Activated CD4-positive, alpha-beta memory T cell treated with anti-CD3 and anti-CD28 coated beads for 36 hours (primary cell): ENCODE measurements at regions of chr15 and their contacts with region 1.

Region 1: DNA sequence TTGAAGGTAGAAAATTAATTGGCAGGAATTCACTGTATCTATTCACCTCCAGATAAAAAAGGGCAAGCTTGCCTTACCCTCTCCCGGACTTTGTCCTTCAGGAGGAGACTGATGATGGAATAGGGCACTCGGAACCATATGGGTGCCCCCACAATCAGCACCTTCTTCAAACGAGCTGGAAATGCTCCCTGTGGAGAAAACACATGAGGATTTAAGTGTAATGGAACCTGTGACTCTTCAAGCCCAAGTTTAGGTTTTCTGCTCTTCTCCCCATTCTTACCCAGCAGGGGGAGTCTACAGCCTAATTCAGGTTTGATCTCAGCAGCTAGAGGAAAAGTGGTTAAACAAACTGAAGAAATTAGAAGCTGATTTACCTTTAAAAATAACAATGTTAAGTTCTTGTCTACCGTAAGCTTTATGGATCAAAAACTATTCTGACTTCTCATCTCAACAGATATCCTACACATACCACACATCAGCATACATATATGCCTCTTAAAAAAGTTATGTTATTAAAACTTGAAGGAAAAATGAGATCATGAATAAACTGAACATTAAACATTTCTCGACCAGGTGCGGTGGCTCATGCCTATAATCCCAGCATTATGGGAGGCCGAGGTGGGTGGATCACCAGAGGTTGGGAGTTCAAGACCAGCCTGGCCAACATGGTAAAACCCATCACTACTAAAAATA is 57.5 kb upstream of the SIN3A start:
- DNase-seq: no peak
- H3K4me3 Mint-ChIP-seq: no peak overlapping the region
- H3K27ac Mint-ChIP-seq: no peak overlapping the region
- H3K4me1 Mint-ChIP-seq: no peaks in the 10 kb centered on the region
- H3K27me3 Mint-ChIP-seq: no peaks in the 10 kb centered on the region

Region 2: GRCh38 chr15:75483961-75484360 is 25.0 kb before region 1 on chr15:
- CTCF ChIA-PET with region 1: no interaction called
- POLR2A ChIA-PET with region 1: no interaction called
- intact Hi-C with region 1: no loop called
- DNase-seq: no peak
- H3K4me3 Mint-ChIP-seq: no peak overlapping the region
- H3K27ac Mint-ChIP-seq: no peak overlapping the region
- H3K4me1 Mint-ChIP-seq: peaks cover 3% of the 10 kb centered on the region
- H3K27me3 Mint-ChIP-seq: no peaks in the 10 kb centered on the region

Region 3: DNA sequence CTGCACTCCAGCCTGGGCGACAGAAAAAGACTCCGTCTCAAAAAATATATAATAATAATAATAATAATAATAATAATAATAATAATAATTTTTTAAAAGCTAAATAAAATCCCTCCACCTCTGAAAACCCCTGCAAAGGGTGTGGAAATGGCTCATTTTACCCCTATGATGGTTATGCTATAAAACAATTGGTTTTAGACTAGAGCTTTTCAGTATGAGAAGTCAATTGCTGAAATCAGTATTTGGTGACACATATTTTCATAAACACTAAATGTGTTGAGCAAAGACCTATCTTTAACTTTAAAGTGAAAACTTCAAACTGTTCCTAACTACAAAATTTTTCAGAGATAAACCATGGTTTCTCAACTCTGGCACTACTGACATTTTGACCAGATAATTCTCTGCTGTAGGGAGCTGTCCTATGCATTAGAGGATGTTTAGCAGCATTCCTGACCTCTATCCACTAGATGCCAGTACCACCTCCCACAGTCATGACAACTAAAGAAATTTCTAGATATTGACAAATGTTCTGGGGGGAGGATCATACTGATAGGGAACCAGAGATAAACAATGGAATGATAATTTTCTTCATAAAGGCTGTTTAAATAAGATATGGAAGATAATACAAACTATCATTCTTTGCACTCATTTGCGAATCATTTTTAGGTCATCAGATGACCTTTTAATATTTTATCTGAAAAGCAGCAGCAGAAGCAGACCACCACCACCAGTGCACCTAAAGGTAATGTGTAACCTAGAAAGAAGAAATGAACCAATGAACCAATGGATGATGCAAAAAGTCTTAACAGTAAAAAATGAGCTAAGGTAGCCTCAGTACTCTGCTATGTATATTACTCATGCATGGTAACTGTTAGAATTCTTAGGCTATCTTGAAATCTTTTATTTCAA is 56.3 kb after region 1 on chr15:
- CTCF ChIA-PET with region 1: no interaction called
- POLR2A ChIA-PET with region 1: no interaction called
- intact Hi-C with region 1: no loop called
- DNase-seq: no peak
- H3K4me3 Mint-ChIP-seq: no peak overlapping the region
- H3K27ac Mint-ChIP-seq: peak overlapping the region; percentile 38
- H3K4me1 Mint-ChIP-seq: peaks cover 15% of the 10 kb centered on the region
- H3K27me3 Mint-ChIP-seq: no peaks in the 10 kb centered on the region

Region 4: GRCh38 chr15:75578948-75579920 is 70.2 kb after region 1 on chr15 and contains the start of gene PTPN9:
- CTCF ChIA-PET with region 1: interaction called, 12 read pairs
- POLR2A ChIA-PET with region 1: no interaction called
- intact Hi-C with region 1: no loop called
- DNase-seq: peak; percentile 84
- H3K4me3 Mint-ChIP-seq: peak within 1 kb of the TSS; percentile 91
- H3K27ac Mint-ChIP-seq: peak within 1 kb of the TSS; percentile 93
- H3K4me1 Mint-ChIP-seq: peaks cover 16% of the 10 kb centered on the region
- H3K27me3 Mint-ChIP-seq: no peaks in the 10 kb centered on the region
- total RNA-seq, gene PTPN9: 19.2 to 20.9 TPM

Region 5: GRCh38 chr15:75639709-75640482 is 130.9 kb after region 1 on chr15 and contains the start of gene IMP3:
- CTCF ChIA-PET with region 1: interaction called, 23 read pairs
- POLR2A ChIA-PET with region 1: interaction called, 6 read pairs
- intact Hi-C with region 1: loop called (anchors 1 kb)
- DNase-seq: peak; percentile 98
- H3K4me3 Mint-ChIP-seq: peak within 1 kb of the TSS; percentile 86
- H3K27ac Mint-ChIP-seq: peak within 1 kb of the TSS; percentile 86
- H3K4me1 Mint-ChIP-seq: peaks cover 27% of the 10 kb centered on the region
- H3K27me3 Mint-ChIP-seq: no peaks in the 10 kb centered on the region
- total RNA-seq, gene IMP3: 71.7 to 72.4 TPM

Region 6: GRCh38 chr15:75647370-75648155 is 138.6 kb after region 1 on chr15 and contains the start of gene SNX33:
- CTCF ChIA-PET with region 1: interaction called, 23 read pairs
- POLR2A ChIA-PET with region 1: interaction called, 4 read pairs
- intact Hi-C with region 1: no loop called
- DNase-seq: peak; percentile 77
- H3K4me3 Mint-ChIP-seq: peak within 1 kb of the TSS; percentile 83
- H3K27ac Mint-ChIP-seq: peak within 1 kb of the TSS; percentile 65
- H3K4me1 Mint-ChIP-seq: peaks cover 44% of the 10 kb centered on the region
- H3K27me3 Mint-ChIP-seq: no peaks in the 10 kb centered on the region
- total RNA-seq, gene SNX33: 3.0 to 3.2 TPM

Region 7: GRCh38 chr15:75684642-75685041 is 175.7 kb after region 1 on chr15:
- CTCF ChIA-PET with region 1: interaction called, 7 read pairs
- POLR2A ChIA-PET with region 1: no interaction called
- intact Hi-C with region 1: loop called (anchors 1 kb)
- DNase-seq: no peak
- H3K4me3 Mint-ChIP-seq: no peak overlapping the region
- H3K27ac Mint-ChIP-seq: no peak overlapping the region
- H3K4me1 Mint-ChIP-seq: no peaks in the 10 kb centered on the region
- H3K27me3 Mint-ChIP-seq: peaks cover 2% of the 10 kb centered on the region